WTC11 (cell line): ENCODE measurements at regions of chr9 and their contacts with region 1.

Region 1: GRCh38 chr9:33290247-33291030 is at the start of gene NFX1:
- DNase-seq: peak; percentile 96
- ATAC-seq: peak; percentile 90
- H3K4me3 Mint-ChIP-seq: peak within 1 kb of the TSS; percentile 99
- H3K27ac Mint-ChIP-seq: peak within 1 kb of the TSS; percentile 99
- H3K4me1 Mint-ChIP-seq: peaks cover 14% of the 10 kb centered on the region
- H3K27me3 Mint-ChIP-seq: no peaks in the 10 kb centered on the region
- CTCF ChIP-seq: no peak
- total RNA-seq, gene NFX1: 25.4 to 30.9 TPM (median 26.5 TPM) in 3 replicates

Region 2: DNA sequence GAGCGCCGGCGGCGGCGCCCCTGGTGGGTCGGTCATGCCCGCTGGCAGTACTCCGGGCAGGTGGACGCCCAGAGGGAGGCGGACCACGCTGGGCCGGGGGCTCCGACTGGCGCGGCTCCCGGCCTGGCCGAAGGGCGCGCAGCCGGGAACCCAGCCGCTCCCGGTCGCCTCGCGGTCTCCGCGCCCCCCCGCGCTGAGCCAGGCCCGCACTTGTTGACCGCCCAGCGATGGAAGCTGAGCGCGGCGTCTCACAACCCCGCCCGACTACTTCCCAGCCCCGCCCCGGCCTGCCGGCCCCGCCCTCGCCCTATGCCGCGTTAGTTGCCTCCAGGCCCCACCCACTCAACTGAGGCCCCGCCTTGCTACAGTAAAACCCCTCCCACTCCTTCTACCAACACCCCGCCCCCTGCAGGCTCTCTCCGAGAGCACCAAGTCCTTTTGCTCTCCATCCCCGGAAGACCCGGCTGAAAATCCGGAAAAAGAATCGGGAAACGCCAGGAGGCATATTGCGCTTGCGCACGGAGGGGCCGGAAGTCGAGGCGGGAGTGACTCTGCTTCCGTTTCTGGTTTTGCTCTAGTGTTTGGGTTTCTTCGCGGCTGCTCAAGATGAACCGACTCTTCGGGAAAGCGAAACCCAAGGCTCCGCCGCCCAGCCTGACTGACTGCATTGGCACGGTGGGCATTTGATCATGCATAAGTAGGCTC is 25.8 kb before region 1 on chr9 and contains the starts of genes BAG1 and CHMP5:
- CTCF ChIA-PET with region 1: interaction called, 4 read pairs
- POLR2A ChIA-PET with region 1: interaction called, 13 read pairs
- DNase-seq: peak; percentile 100
- ATAC-seq: peak; percentile 99
- H3K4me3 Mint-ChIP-seq: peak within 1 kb of the TSS; percentile 98
- H3K27ac Mint-ChIP-seq: peak within 1 kb of the TSS; percentile 95
- H3K4me1 Mint-ChIP-seq: peaks cover 13% of the 10 kb centered on the region
- H3K27me3 Mint-ChIP-seq: no peaks in the 10 kb centered on the region
- CTCF ChIP-seq: no peak
- total RNA-seq, gene BAG1: 44.7 to 52.9 TPM (median 48.2 TPM) in 3 replicates
- total RNA-seq, gene CHMP5: 46.2 to 50.6 TPM (median 46.9 TPM) in 3 replicates

Region 3: DNA sequence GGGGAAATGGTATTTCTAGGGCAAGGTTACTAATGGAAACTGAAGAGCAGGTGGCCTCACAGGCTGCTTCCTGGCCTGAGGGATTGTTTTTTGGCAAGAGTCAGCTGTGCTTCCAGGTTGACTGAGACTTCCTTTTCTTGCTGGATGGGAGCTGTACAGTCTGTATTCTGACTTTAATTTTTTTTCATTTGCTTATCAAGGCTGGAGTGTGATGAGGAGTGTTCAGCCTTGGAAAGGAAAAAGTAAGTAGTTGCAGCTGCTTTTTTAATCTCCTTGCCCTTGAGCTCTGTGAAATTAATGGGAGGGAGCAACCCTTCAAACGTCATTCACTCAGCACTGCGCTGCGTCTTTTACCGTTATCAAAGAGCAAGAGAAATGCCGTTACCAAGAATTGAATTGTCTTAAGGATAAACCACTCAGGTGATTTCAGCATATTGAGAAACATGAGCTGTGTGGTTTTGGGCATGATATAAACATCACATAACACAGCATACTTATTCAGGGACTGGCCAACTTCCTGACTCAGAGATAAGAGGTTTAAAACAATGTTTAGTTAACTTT is 64.3 kb after region 1 on chr9:
- CTCF ChIA-PET with region 1: no interaction called
- POLR2A ChIA-PET with region 1: no interaction called
- DNase-seq: no peak
- ATAC-seq: no peak
- H3K4me3 Mint-ChIP-seq: no peak overlapping the region
- H3K27ac Mint-ChIP-seq: no peak overlapping the region
- H3K4me1 Mint-ChIP-seq: no peaks in the 10 kb centered on the region
- H3K27me3 Mint-ChIP-seq: no peaks in the 10 kb centered on the region
- CTCF ChIP-seq: no peak